Endothelial cell of umbilical vein (primary cell): ENCODE measurements at regions of chr5 and their contacts with region 1.

Region 1: GRCh38 chr5:17132444-17133083 is 84.9 kb upstream of the BASP1 start:
- DNase-seq: peak; percentile 67
- H3K4me3 ChIP-seq: no peak overlapping the region
- H3K27ac ChIP-seq: no peak overlapping the region
- H3K4me1 ChIP-seq: peaks cover 23% of the 10 kb centered on the region
- H3K27me3 ChIP-seq: no peaks in the 10 kb centered on the region
- CTCF ChIP-seq: peak; percentile 26 to 27
- POLR2A ChIP-seq: no peak

Region 2: GRCh38 chr5:16446993-16447392 is 685.6 kb before region 1 on chr5:
- CTCF ChIA-PET with region 1: no interaction called
- POLR2A ChIA-PET with region 1: no interaction called
- dilution Hi-C with region 1: no loop called
- intact Hi-C with region 1: no loop called
- DNase-seq: no peak
- H3K4me3 ChIP-seq: no peak overlapping the region
- H3K27ac ChIP-seq: no peak overlapping the region
- H3K4me1 ChIP-seq: no peaks in the 10 kb centered on the region
- H3K27me3 ChIP-seq: no peaks in the 10 kb centered on the region
- CTCF ChIP-seq: no peak
- POLR2A ChIP-seq: no peak

Region 3: DNA sequence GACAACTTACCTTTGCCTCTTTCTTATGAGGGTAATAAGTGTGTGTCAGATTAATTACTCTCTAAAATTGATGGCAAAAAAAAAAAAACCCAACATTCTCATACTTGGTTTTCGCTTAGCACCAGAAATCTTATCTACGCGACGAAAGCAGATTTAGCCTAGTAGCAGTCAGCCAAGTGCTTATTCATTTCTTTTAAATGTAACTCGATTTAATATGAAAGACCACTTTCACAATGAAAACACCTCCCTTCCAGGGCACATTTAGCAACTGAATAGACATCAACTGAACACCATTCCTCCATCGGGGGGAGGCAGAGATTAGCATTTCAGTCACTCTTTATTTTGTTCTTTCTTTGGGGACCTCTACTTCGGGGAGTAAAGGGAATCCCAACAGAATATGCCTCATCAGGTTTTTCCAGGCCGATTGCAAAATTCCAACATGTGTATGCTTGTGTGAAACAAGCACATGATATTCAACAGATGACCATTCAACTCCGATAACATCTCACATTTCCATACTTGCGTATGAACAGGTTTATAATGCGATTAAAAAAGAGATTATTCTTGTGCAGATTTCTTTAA is 391.7 kb before region 1 on chr5:
- CTCF ChIA-PET with region 1: no interaction called
- POLR2A ChIA-PET with region 1: no interaction called
- dilution Hi-C with region 1: no loop called
- intact Hi-C with region 1: no loop called
- DNase-seq: no peak
- H3K4me3 ChIP-seq: no peak overlapping the region
- H3K27ac ChIP-seq: peak overlapping the region; percentile 4
- H3K4me1 ChIP-seq: peaks cover 34% of the 10 kb centered on the region
- H3K27me3 ChIP-seq: no peaks in the 10 kb centered on the region
- CTCF ChIP-seq: no peak
- POLR2A ChIP-seq: no peak

Region 4: DNA sequence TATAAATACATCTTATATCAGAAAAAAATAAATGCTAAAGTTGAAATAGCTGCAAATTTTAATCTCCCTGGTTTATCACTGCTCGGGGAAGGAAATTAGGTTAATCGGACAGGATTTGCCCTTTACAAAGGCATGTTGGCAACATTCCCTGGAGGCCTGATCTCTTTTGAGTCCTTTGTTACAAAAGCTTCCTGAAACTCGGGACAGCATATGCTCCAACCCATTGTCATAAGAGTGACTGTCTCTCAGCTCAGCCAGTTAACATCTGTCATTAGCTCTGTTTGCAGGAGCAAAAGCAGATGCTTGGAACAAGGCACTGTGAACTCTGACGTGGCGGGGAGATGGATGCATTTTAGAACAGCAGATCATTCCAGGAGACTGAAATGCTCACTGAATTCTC is 277.1 kb before region 1 on chr5:
- CTCF ChIA-PET with region 1: interaction called, 12 read pairs
- POLR2A ChIA-PET with region 1: no interaction called
- dilution Hi-C with region 1: no loop called
- intact Hi-C with region 1: no loop called
- DNase-seq: peak; percentile 83
- H3K4me3 ChIP-seq: no peak overlapping the region
- H3K27ac ChIP-seq: peak overlapping the region; percentile 36
- H3K4me1 ChIP-seq: peaks cover 24% of the 10 kb centered on the region
- H3K27me3 ChIP-seq: no peaks in the 10 kb centered on the region
- CTCF ChIP-seq: no peak
- POLR2A ChIP-seq: no peak

Region 5: DNA sequence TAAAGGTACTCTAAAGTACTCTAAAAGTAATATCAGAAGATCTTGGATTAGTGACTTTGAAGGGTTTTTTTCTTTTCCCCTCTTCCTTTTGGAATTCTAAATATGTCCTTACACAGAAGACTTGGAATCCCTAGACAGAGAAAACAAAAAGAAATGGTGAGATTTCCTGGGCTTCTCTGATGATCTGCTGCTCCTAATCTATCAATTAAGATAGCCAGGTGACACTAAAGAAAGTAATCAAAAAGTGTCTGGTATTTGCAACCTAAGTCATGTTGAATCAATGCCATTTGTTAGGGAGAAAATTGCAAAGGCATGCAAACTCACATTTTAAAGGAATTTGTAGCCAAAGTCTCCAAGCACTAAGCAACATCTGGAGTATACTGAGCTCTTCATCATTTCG is 167.0 kb before region 1 on chr5:
- CTCF ChIA-PET with region 1: no interaction called
- POLR2A ChIA-PET with region 1: no interaction called
- dilution Hi-C with region 1: no loop called
- intact Hi-C with region 1: no loop called
- DNase-seq: no peak
- H3K4me3 ChIP-seq: no peak overlapping the region
- H3K27ac ChIP-seq: no peak overlapping the region
- H3K4me1 ChIP-seq: no peaks in the 10 kb centered on the region
- H3K27me3 ChIP-seq: no peaks in the 10 kb centered on the region
- CTCF ChIP-seq: no peak
- POLR2A ChIP-seq: no peak

Region 6: DNA sequence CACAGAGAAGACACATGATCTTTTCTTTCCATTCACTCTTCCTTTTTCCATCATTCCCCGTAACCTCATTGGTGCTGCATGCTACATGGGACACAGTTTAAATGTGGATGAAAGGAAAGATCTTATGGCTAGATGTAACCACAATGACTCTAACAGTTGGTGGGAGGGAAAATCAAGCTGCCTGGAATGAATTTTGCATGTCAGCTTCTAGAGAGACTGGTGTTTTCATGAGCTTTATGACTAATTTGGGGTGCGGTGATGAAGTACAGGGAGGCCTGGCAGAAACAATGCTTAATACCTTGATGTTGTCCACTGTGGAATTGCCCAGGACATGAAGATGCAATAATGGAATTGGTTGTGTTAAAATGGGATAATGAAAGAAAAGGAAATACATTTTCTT is 140.6 kb before region 1 on chr5:
- CTCF ChIA-PET with region 1: interaction called, 34 read pairs
- POLR2A ChIA-PET with region 1: no interaction called
- dilution Hi-C with region 1: no loop called
- intact Hi-C with region 1: loop called (anchors 1 kb)
- DNase-seq: peak; percentile 56
- H3K4me3 ChIP-seq: no peak overlapping the region
- H3K27ac ChIP-seq: peak overlapping the region; percentile 76
- H3K4me1 ChIP-seq: peaks cover 41% of the 10 kb centered on the region
- H3K27me3 ChIP-seq: no peaks in the 10 kb centered on the region
- CTCF ChIP-seq: no peak
- POLR2A ChIP-seq: no peak

Region 7: DNA sequence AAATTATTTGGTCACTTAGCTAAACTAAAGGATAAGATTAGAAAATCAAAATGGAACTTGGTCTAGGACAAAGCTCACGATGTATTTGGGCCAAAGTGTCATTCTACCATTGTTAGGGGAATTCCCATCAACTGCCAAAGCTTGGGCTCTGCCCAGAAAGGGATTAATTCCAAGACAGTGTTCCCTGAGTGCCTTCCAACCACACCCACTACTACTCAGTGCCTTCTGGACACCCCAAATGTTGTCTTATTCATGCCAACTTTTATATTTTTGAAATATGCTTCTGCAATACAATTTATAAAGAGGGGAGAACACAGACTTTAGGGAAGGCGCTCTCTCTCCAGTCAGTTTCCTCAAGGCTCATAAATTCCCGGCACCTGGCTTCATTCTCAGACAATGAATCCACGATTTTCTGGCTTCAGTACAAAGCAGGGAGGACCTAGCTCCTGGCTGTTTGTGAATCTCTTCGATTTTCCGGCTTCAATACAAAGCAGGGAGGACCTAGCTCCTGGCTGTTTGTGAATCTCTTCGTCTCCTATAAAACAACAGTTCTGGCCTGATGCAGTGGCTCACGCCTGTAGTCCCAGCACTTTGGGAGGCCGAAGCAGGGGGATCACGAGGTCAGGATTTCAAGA is 76.4 kb before region 1 on chr5:
- CTCF ChIA-PET with region 1: interaction called, 27 read pairs
- POLR2A ChIA-PET with region 1: no interaction called
- dilution Hi-C with region 1: no loop called
- intact Hi-C with region 1: no loop called
- DNase-seq: peak; percentile 39
- H3K4me3 ChIP-seq: no peak overlapping the region
- H3K27ac ChIP-seq: no peak overlapping the region
- H3K4me1 ChIP-seq: peaks cover 7% of the 10 kb centered on the region
- H3K27me3 ChIP-seq: no peaks in the 10 kb centered on the region
- CTCF ChIP-seq: no peak
- POLR2A ChIP-seq: no peak

Region 8: GRCh38 chr5:17089690-17090089 is 42.9 kb before region 1 on chr5:
- CTCF ChIA-PET with region 1: interaction called, 15 read pairs
- POLR2A ChIA-PET with region 1: no interaction called
- dilution Hi-C with region 1: no loop called
- intact Hi-C with region 1: no loop called
- DNase-seq: no peak
- H3K4me3 ChIP-seq: no peak overlapping the region
- H3K27ac ChIP-seq: no peak overlapping the region
- H3K4me1 ChIP-seq: no peaks in the 10 kb centered on the region
- H3K27me3 ChIP-seq: no peaks in the 10 kb centered on the region
- CTCF ChIP-seq: no peak
- POLR2A ChIP-seq: no peak

Region 9: GRCh38 chr5:17143335-17143734 is 10.8 kb after region 1 on chr5:
- CTCF ChIA-PET with region 1: interaction called, 46 read pairs
- POLR2A ChIA-PET with region 1: interaction called, 3 read pairs
- dilution Hi-C with region 1: no loop called
- intact Hi-C with region 1: no loop called
- DNase-seq: peak; percentile 68
- H3K4me3 ChIP-seq: no peak overlapping the region
- H3K27ac ChIP-seq: peak overlapping the region; percentile 15
- H3K4me1 ChIP-seq: peaks cover 18% of the 10 kb centered on the region
- H3K27me3 ChIP-seq: no peaks in the 10 kb centered on the region
- CTCF ChIP-seq: no peak
- POLR2A ChIP-seq: no peak

Region 10: GRCh38 chr5:17180957-17181723 is 48.6 kb after region 1 on chr5:
- CTCF ChIA-PET with region 1: interaction called, 10 read pairs
- POLR2A ChIA-PET with region 1: no interaction called
- dilution Hi-C with region 1: no loop called
- intact Hi-C with region 1: no loop called
- DNase-seq: peak; percentile 74
- H3K4me3 ChIP-seq: no peak overlapping the region
- H3K27ac ChIP-seq: peak overlapping the region; percentile 25
- H3K4me1 ChIP-seq: peaks cover 9% of the 10 kb centered on the region
- H3K27me3 ChIP-seq: no peaks in the 10 kb centered on the region
- CTCF ChIP-seq: no peak
- POLR2A ChIP-seq: no peak

Region 11: DNA sequence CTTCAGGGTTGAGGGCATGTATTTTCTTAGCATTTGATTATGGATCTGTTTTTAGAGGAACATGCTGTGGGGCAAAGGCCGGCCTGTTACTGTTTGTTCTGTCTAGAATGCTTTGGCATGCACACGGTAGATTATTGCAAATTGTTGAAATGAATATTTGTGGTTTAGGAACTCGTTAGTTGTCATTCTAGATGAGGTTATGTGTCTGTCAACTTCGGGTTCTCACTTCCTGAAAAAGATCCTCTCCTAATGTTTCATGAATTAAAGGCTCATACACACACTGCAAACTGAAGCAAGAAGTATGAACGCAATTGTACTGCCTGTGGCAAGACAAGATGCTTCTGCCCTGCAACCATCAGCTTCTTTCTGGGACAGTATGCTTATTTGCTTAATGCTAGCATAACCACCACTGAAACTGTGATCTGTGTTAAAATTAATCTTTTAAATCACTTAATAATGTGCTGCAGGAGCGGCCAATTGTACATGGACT is 184.5 kb after region 1 on chr5:
- CTCF ChIA-PET with region 1: no interaction called
- POLR2A ChIA-PET with region 1: no interaction called
- dilution Hi-C with region 1: no loop called
- intact Hi-C with region 1: no loop called
- DNase-seq: no peak
- H3K4me3 ChIP-seq: no peak overlapping the region
- H3K27ac ChIP-seq: no peak overlapping the region
- H3K4me1 ChIP-seq: no peaks in the 10 kb centered on the region
- H3K27me3 ChIP-seq: no peaks in the 10 kb centered on the region
- CTCF ChIP-seq: no peak
- POLR2A ChIP-seq: no peak